Posterior vena cava (tissue), 2 donors: ENCODE measurements at regions of chr2 and their contacts with region 1.

Region 1: GRCh38 chr2:43450617-43451016 is 145.2 kb downstream of the THADA start:
- DNase-seq: no peak

Region 2: GRCh38 chr2:42639340-42640077 is 811.1 kb before region 1 on chr2:
- intact Hi-C with region 1: no loop called
- DNase-seq: no peak

Region 3: GRCh38 chr2:43158259-43158880 is 292.2 kb before region 1 on chr2:
- intact Hi-C with region 1: no loop called
- DNase-seq: peak; percentile 90

Region 4: DNA sequence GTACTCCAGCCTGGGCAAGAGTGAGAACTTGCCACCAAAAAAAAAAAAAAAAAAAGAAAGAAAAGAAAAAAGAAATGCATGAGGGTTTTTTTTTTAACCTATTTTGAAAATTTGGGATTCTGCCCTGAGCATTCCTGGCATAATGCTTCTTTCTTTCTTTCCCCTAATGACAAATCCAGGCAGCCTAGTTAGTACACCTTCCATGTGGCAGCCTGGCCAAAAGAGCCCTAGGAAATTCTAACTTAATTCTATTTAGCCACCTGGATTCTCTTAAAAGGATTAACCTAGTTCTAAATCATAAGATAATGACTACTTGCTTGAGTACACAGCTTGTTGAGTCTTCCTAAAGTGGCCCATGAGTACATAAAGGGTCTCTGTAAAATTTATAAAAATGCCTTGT is 14.9 kb before region 1 on chr2:
- intact Hi-C with region 1: loop called in 1 of 2 experiments (anchors 1 kb)
- DNase-seq: no peak

Region 5: DNA sequence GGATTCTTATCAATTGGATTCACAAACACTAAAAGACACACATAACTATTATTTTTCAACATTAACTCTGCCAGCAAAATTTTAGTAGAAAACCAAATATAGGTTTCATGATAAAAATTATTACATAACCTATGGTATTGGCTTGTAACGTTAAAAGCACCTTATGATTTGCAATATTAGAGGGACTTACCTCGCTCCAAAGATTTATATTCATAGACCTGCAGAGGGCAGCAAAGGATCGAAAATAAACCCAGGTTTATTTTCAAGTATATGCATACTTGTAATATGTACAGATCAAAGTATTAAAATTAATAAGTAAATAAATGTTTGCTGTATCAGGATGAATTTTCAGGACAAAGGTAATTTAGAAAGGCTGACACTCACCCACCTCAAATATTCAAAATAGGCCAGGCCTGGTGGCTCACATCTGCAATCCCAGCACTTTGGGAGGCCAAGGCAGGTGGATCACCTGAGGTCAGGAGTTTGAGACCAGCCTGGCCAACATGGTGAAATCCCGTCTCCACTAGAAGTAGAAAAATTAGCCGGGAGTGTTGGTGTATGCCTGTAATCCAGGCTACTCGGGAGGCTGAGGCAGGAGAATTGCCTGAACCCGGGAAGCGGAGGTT is 499.9 kb after region 1 on chr2:
- intact Hi-C with region 1: no loop called
- DNase-seq: no peak